Activated CD8-positive, alpha-beta T cell treated with anti-CD3 and anti-CD28 coated beads, Interleukin-2, amount 10 ng/mL, durations not matched to agents 7 days and 5 days (primary cell): ENCODE measurements at regions of chr15 and their contacts with region 1.

Region 1: DNA sequence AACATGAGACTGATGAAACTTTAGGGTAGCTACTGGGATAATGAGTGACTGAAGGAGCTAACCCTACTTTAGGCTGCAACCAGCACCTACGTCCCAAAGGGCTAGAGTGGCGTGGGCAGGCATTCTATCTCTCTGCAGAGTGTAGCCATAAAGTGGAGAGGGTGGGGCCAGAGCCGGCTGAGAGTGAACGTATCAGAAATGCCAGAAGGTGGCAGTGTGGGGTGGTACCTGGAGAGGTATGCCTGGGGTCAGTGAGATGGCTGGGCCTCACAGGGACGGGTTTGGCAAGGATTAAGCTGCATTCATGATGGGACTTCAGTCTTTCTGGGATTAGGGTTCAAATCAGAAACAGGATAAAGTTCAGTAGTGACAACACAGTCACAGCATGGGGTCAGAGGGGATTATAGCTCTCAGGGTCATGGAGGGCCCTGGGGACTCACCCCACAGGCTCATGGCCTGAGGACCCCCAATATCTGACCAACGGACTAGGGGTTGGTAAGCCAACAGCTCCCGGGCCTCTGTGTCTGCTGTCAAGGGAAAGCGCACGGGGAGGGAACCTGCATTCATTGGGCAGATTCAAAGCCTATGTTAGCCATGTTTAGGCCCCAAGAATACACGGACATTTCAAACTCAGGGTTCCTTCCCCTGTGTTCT is 86.5 kb upstream of the FOXB1 start:
- DNase-seq: peak; percentile 87
- ATAC-seq: peak; percentile 77
- H3K4me3 Mint-ChIP-seq: no peak overlapping the region
- H3K27ac Mint-ChIP-seq: peak overlapping the region; percentile 48
- H3K4me1 Mint-ChIP-seq: peaks cover 33% of the 10 kb centered on the region
- H3K27me3 Mint-ChIP-seq: peaks cover 17% of the 10 kb centered on the region

Region 2: DNA sequence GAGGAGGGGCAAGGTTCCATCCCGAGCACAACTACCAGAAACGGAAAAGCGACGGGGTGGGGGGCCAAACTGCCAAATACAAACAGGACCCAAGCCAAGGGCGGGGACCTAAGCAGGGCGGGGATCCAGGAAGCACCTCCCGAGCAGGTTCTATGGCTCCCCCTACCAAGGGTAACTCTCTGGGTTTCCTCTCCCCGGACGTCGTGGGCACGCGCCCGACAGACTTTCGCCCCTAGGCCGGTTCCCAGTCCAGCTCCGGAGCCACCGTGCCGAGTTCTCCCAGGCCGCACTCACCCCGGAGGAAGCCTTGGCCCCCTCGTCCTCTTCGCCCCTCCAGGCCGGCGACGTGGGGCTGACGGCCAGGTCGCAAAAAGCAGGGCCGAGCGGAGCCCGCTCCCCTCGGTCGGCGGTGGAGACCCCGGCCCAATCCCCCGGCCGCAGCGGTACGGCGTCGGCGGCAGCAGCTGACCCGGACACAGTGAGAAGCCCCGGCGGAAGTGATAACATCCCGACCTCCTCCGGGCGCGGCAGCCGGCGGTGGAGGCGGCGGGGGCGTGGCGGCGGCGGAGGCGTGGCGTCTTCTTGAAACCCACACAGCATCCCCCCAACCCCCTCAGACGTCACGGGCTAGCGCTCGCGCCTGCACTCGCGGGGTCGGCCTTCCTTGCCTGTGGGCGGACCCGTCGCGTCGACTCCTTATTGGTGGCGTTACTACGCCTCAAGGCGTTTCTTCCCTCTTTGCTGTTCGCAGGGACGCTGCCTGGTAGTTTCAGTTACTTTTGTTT is 228.6 kb before region 1 on chr15 and contains the start of gene BNIP2:
- CTCF ChIA-PET with region 1: interaction called, 13 read pairs
- POLR2A ChIA-PET with region 1: interaction called, 3 read pairs
- DNase-seq: peak; percentile 100
- ATAC-seq: peak; percentile 94
- H3K4me3 Mint-ChIP-seq: peak within 1 kb of the TSS; percentile 88
- H3K27ac Mint-ChIP-seq: peak within 1 kb of the TSS; percentile 96
- H3K4me1 Mint-ChIP-seq: peaks cover 40% of the 10 kb centered on the region
- H3K27me3 Mint-ChIP-seq: no peaks in the 10 kb centered on the region
- total RNA-seq, gene BNIP2: 69.0 to 74.8 TPM

Region 3: DNA sequence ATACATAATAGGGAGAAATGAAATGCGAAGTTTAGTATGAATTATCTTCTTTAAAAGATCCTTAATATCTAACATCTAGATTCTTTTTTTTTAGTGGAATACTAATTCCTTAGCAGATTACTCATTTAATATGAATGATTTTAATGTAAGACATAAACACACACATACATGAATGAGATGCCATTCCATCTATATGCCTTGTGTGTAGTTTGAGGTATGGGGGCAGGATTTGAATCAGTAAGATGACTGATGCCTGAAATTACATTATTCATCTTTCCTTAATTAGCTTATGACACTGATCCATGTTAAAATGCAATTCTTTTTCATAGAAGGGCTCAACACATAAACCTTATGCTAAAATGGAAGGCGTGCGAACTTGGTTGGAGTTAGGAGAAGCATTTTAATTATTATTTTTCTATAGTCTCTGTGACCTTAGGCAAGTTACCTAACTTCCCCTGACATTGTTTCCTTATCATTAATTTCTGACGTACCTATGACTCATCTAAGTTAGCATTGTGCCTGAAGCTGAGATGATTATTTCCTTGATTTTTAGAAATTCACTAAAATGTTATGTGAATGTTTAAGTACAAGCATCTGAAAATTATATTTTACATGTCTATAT is 217.7 kb before region 1 on chr15:
- CTCF ChIA-PET with region 1: no interaction called
- POLR2A ChIA-PET with region 1: no interaction called
- DNase-seq: no peak
- ATAC-seq: no peak
- H3K4me3 Mint-ChIP-seq: no peak overlapping the region
- H3K27ac Mint-ChIP-seq: no peak overlapping the region
- H3K4me1 Mint-ChIP-seq: no peaks in the 10 kb centered on the region
- H3K27me3 Mint-ChIP-seq: peaks cover 19% of the 10 kb centered on the region

Region 4: DNA sequence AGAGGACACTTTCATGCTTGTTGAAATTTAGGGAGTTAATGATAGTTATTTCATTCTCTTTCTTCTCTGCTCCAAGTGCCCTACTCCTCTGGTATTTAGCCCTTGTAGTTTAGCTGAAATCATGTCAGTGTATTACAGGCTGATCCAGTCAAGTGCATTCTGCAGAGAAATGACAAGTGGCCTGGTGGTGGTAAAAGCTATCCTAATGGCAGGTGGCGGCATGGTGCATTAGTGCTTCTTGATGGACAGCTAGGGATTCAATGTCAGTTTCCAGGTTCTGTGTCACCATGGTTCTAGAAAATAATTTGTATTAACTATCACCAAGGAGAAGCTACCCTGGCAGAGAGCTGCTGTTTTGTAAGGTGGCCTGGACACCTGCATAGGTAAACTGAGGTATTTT is 138.5 kb before region 1 on chr15:
- CTCF ChIA-PET with region 1: no interaction called
- POLR2A ChIA-PET with region 1: no interaction called
- DNase-seq: no peak
- ATAC-seq: no peak
- H3K4me3 Mint-ChIP-seq: no peak overlapping the region
- H3K27ac Mint-ChIP-seq: no peak overlapping the region
- H3K4me1 Mint-ChIP-seq: peaks cover 6% of the 10 kb centered on the region
- H3K27me3 Mint-ChIP-seq: peaks cover 13% of the 10 kb centered on the region

Region 5: GRCh38 chr15:59933607-59934006 is 16.0 kb after region 1 on chr15:
- CTCF ChIA-PET with region 1: interaction called, 29 read pairs
- POLR2A ChIA-PET with region 1: no interaction called
- DNase-seq: no peak
- ATAC-seq: no peak
- H3K4me3 Mint-ChIP-seq: no peak overlapping the region
- H3K27ac Mint-ChIP-seq: no peak overlapping the region
- H3K4me1 Mint-ChIP-seq: peaks cover 16% of the 10 kb centered on the region
- H3K27me3 Mint-ChIP-seq: peaks cover 32% of the 10 kb centered on the region

Region 6: GRCh38 chr15:59950603-59951388 is 33.2 kb after region 1 on chr15:
- CTCF ChIA-PET with region 1: no interaction called
- POLR2A ChIA-PET with region 1: no interaction called
- DNase-seq: no peak
- ATAC-seq: no peak
- H3K4me3 Mint-ChIP-seq: no peak overlapping the region
- H3K27ac Mint-ChIP-seq: no peak overlapping the region
- H3K4me1 Mint-ChIP-seq: peaks cover 18% of the 10 kb centered on the region
- H3K27me3 Mint-ChIP-seq: peaks cover 11% of the 10 kb centered on the region

Region 7: GRCh38 chr15:59976480-59977271 is 59.0 kb after region 1 on chr15:
- CTCF ChIA-PET with region 1: interaction called, 34 read pairs
- POLR2A ChIA-PET with region 1: no interaction called
- DNase-seq: peak; percentile 91
- ATAC-seq: peak; percentile 98
- H3K4me3 Mint-ChIP-seq: peak overlapping the region; percentile 57
- H3K27ac Mint-ChIP-seq: peak overlapping the region; percentile 91
- H3K4me1 Mint-ChIP-seq: peaks cover 39% of the 10 kb centered on the region
- H3K27me3 Mint-ChIP-seq: peaks cover 5% of the 10 kb centered on the region

Region 8: DNA sequence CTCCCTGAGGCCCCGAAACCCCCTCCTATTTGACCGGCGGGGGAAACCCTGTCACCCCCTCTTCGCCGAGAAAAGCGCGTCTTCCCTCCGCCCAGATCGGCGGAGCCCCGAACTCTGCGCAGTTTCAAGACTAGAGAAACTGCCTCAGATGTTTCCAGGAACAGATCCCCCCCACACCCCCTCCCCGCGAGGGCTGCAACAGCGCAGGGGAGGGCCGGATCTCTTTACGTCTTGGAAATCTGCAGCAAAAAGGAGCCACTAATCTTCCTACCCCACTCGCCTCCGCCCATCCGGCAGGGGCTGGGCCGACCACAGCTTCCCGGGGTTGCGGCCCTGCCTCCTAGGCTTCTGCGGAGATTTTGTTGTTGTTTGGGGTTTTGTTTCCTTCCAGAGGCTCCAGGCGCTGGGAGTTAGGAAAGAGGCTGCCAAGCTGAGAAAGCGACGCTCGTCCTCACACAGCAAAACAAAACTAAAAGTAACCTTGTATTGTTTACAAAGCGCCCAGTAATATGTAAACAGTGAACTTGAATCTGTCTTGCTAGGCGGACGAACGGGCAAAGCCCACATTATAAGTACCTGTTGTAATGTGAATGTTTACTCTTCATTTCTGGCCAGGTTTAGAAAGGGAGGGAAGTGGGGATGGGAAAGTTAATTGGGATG is 88.7 kb after region 1 on chr15:
- CTCF ChIA-PET with region 1: interaction called, 34 read pairs
- POLR2A ChIA-PET with region 1: interaction called, 4 read pairs
- DNase-seq: peak; percentile 80
- ATAC-seq: peak; percentile 72
- H3K4me3 Mint-ChIP-seq: peak overlapping the region; percentile 94
- H3K27ac Mint-ChIP-seq: peak overlapping the region; percentile 90
- H3K4me1 Mint-ChIP-seq: peaks cover 55% of the 10 kb centered on the region
- H3K27me3 Mint-ChIP-seq: peaks cover 88% of the 10 kb centered on the region

Region 9: GRCh38 chr15:60128000-60128376 is 210.4 kb after region 1 on chr15:
- CTCF ChIA-PET with region 1: interaction called, 11 read pairs
- POLR2A ChIA-PET with region 1: no interaction called
- DNase-seq: no peak
- ATAC-seq: no peak
- H3K4me3 Mint-ChIP-seq: peak overlapping the region; percentile 65
- H3K27ac Mint-ChIP-seq: peak overlapping the region; percentile 77
- H3K4me1 Mint-ChIP-seq: peaks cover 51% of the 10 kb centered on the region
- H3K27me3 Mint-ChIP-seq: peaks cover 9% of the 10 kb centered on the region

Region 10: GRCh38 chr15:60326824-60327654 is 409.4 kb after region 1 on chr15:
- CTCF ChIA-PET with region 1: interaction called, 50 read pairs
- POLR2A ChIA-PET with region 1: no interaction called
- DNase-seq: peak; percentile 60
- ATAC-seq: no peak
- H3K4me3 Mint-ChIP-seq: no peak overlapping the region
- H3K27ac Mint-ChIP-seq: no peak overlapping the region
- H3K4me1 Mint-ChIP-seq: no peaks in the 10 kb centered on the region
- H3K27me3 Mint-ChIP-seq: peaks cover 40% of the 10 kb centered on the region

Region 11: DNA sequence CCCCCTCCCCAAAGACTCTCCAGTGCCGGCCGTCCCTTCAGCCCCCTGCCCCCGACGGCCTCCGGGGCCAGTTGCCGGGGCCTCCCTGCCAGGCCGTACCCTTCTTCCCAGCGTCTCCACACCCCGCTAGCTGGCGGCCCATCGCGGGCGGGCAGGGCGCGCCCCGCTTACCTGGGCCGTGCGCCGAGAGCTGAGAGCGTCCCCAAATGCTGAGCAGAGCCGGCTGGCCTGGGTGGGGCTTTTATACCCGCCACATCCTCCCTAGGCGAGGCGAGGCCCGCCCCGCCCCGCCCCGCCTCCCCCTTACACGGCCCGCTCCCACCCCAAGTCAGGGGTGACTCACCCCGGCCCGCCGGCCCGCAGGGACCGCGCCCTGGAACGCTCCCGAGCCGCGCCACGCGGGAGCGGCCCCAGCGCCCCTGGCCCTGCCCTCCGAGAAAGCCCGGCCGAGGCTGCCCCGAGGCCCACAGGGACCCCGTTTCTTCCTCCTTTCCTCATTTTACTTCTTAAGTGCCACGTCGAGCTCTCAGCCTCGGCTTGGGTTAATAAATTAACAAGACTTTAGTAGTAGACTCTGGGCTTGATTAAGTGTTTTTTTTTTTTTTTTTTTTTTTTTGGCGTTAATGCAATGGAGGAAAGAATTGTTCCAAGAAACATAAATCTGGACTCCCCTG is 480.3 kb after region 1 on chr15 and contains the start of gene ANXA2:
- CTCF ChIA-PET with region 1: no interaction called
- POLR2A ChIA-PET with region 1: no interaction called
- DNase-seq: peak; percentile 91
- ATAC-seq: peak; percentile 86
- H3K4me3 Mint-ChIP-seq: peak within 1 kb of the TSS; percentile 94
- H3K27ac Mint-ChIP-seq: peak within 1 kb of the TSS; percentile 97
- H3K4me1 Mint-ChIP-seq: peaks cover 53% of the 10 kb centered on the region
- H3K27me3 Mint-ChIP-seq: peaks cover 6% of the 10 kb centered on the region
- total RNA-seq, gene ANXA2: 368 to 375 TPM